ENCODE measurements at regions of chr14 and their contacts with region 1.

Region 1: GRCh38 chr14:103989964-103990363 is 47.6 kb upstream of the RD3L start:
- DNase-seq: no peak
- H3K4me3 ChIP-seq: no peak overlapping the region
- H3K27ac ChIP-seq: no peak overlapping the region
- H3K4me1 ChIP-seq: no peaks in the 10 kb centered on the region
- H3K27me3 ChIP-seq: no peaks in the 10 kb centered on the region
- CTCF ChIP-seq: no peak
- POLR2A ChIP-seq: no peak

Region 2: DNA sequence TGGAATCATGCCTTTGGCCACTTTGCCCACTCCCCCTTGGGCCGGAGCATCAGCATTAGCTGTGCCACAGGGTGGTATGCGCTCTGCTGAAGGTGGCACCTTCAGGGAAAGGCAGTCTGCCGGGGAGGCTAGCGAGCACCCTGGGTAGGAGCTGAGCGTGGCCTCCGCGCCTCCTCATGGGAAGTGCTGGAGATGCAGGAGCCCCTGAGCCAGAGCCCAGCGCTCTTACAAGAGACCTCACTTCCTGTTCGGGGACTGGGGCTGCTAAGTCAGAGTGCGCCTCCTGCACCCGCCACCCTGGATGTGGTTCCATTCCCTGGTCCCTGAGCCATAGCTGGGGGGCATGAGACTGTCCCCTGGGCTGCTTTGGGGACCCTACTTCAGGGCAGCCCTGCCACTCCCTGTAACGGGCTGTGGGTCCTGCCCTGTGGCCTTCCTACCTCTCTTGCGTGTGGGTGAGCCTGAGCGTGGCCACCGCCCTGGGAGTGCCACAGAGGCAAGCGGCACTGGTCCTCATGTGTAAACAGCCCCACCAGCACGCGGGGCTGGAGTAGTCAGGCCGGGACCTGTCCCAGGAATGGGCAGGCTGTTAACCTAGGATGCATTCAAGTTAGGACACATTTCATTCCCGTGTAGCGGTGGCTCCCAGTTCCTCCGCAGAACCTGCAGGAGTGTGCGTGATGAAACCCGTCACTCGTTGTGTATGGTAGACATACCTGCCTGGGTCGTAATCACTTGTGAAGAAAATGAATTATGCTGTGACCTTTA is 407.8 kb before region 1 on chr14:
- intact Hi-C with region 1: loop called in 1 of 2 experiments (anchors 10 kb)
- DNase-seq: no peak
- H3K4me3 ChIP-seq: no peak overlapping the region
- H3K27ac ChIP-seq: no peak overlapping the region
- H3K4me1 ChIP-seq: peaks cover 0 to 4% of the 10 kb centered on the region in 2 donors
- H3K27me3 ChIP-seq: no peaks in the 10 kb centered on the region
- CTCF ChIP-seq: no peak
- POLR2A ChIP-seq: no peak

Measured in adrenal gland (tissue), 19 donors.